Activated CD4-positive, alpha-beta memory T cell treated with anti-CD3 and anti-CD28 coated beads for 36 hours (primary cell): ENCODE measurements at regions of chr16 and their contacts with region 1.

Region 1: DNA sequence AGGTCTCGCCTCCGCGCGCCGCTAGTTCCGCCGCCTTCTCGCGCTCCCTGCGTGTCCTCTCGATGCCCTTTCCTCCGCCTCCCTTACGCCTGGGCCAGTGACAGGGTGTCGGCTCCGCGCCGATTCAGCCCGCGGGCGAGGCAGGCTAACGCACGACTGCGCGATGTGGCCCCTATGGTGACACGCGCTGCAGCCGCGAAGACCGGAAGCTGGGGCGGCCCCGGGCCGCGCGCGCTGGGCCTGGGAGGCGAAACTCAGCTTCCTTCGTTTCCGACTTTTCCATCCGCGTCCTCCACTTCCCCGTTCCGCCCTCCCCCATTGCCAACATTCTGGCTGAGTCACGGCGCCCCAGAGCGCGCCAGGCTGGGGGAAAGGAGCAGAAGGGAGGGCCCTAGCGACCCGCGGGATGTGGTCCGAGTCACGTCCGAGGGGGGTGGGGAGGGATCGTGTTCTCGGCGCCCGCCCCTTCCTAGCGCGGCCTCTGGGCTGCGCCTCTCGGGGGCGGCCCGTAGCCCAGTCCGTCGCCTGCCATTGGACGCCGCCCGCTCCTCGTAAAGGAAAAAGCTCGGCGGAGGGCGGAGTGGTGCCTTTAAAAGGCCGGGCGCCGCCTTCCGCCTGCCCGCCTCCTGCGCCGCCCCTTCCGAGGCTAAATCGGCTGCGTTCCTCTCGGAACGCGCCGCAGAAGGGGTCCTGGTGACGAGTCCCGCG is at the start of gene ALDOA:
- DNase-seq: peak; percentile 98
- H3K4me3 Mint-ChIP-seq: peak within 1 kb of the TSS; percentile 97
- H3K27ac Mint-ChIP-seq: peak within 1 kb of the TSS; percentile 99
- H3K4me1 Mint-ChIP-seq: peaks cover 34% of the 10 kb centered on the region
- H3K27me3 Mint-ChIP-seq: no peaks in the 10 kb centered on the region
- total RNA-seq, gene ALDOA: 1,724 to 1,734 TPM

Region 2: DNA sequence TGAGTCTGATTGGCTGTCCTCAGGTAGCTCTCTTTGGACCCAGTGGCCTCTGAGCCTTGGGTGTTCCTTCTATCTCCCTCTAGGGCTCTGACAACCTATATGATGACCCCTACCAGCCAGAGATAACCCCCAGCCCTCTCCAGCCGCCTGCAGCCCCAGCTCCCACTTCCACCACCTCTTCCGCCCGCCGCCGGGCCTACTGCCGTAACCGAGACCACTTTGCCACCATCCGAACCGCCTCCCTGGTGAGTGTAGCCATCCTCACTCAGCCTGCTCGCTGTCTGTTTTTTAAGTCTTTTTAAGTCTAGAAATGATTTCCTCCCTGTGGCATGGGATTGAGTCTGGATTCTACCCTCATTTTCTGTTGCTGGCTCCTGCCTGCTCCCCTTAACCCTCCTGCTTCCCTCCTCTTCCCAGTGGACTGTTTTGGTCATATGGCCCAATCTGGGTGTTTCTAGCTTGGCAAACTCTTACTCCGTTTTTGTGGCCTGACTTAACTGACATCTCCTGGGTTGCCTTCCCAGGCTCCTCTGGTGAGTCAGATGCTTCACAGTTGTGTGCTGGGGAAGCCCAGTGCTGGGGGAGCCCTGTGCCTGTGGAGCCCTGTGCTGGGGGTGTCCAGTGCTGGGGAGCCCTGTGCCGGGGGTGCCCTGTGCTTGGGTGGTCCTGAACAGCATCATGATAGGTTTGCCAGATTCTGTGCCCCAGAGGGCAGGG is 81.7 kb before region 1 on chr16:
- CTCF ChIA-PET with region 1: no interaction called
- POLR2A ChIA-PET with region 1: no interaction called
- intact Hi-C with region 1: no loop called
- DNase-seq: no peak
- H3K4me3 Mint-ChIP-seq: no peak overlapping the region
- H3K27ac Mint-ChIP-seq: no peak overlapping the region
- H3K4me1 Mint-ChIP-seq: no peaks in the 10 kb centered on the region
- H3K27me3 Mint-ChIP-seq: no peaks in the 10 kb centered on the region

Region 3: DNA sequence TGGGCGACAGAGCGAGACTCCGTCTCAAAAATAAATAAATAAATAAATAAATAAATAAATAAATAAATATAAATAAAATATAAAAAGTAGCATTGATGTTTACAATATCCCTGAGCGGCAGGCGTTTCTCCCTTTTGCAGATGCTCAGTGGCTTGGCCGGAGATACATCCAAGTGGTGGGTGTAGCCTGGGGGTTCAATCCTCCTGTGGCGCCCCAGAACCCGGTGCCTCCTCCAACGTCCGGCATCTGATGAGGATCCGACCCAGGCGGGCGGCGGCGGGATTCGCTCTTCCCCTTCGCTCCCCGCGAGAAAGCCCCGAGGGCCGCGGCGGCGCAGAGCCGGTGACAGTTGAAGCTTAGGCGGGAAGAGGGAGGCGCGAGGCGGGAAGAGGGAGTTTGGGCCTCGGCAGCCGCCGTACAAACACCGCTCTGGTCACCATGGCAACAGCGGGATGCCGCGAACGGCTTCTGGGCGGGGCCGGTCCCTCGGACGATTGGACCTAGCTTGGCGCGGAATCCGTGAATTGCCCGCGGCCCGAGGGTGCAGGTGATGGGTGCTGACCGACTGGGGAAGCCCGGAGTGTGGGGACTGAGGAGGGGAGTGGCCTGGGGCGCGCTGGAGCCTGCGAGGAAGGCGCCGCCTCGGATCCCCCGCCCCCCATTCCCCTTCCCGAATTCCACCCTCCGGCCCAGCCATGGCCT is 12.5 kb before region 1 on chr16:
- CTCF ChIA-PET with region 1: interaction called, 33 read pairs
- POLR2A ChIA-PET with region 1: interaction called, 48 read pairs
- intact Hi-C with region 1: loop called (anchors 1 kb)
- DNase-seq: peak; percentile 95
- H3K4me3 Mint-ChIP-seq: peak overlapping the region; percentile 86
- H3K27ac Mint-ChIP-seq: peak overlapping the region; percentile 49
- H3K4me1 Mint-ChIP-seq: peaks cover 28% of the 10 kb centered on the region
- H3K27me3 Mint-ChIP-seq: no peaks in the 10 kb centered on the region

Region 4: DNA sequence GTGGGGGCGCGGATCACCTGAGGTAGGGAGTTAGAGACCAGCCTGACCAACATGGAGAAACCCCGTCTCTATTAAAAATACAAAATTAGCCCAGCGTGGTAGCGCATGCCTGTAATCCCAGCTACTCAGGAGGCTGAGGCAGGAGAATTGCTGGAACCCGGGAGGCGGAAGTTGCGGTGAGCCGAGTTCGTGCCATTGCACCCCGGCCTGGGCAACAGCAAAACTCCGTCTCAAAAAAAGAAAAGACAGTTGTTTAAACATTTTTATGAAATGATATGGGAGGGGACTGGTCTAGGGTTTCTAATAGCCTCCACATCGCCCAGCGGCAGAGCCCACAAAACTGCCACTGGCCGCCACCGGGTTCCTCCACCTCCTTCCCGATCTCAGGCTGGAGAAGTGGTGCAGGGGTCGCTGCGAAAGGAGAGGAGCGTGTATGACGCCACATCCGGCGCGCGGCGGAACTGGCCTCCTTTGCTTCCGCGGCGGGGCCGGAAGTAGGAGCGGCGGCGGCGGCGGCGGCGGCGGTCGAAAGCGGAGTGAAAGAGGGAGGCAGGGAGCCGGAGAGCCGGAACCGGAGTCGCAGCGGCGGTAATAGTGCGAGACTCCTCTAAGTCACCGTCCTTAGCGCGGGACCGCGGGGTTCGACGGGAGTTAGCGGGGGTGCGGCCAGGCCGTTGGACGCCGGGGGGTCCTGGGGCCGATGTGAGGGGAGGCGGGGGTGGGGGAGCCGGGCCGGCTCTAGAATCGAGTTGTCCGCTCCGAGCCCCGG is 10.4 kb after region 1 on chr16 and contains the start of gene PPP4C:
- CTCF ChIA-PET with region 1: interaction called, 18 read pairs
- POLR2A ChIA-PET with region 1: interaction called, 42 read pairs
- intact Hi-C with region 1: loop called (anchors 1 kb)
- DNase-seq: peak; percentile 95
- H3K4me3 Mint-ChIP-seq: peak within 1 kb of the TSS; percentile 91
- H3K27ac Mint-ChIP-seq: peak within 1 kb of the TSS; percentile 93
- H3K4me1 Mint-ChIP-seq: peaks cover 39% of the 10 kb centered on the region
- H3K27me3 Mint-ChIP-seq: no peaks in the 10 kb centered on the region
- total RNA-seq, gene PPP4C: 121 to 133 TPM

Region 5: DNA sequence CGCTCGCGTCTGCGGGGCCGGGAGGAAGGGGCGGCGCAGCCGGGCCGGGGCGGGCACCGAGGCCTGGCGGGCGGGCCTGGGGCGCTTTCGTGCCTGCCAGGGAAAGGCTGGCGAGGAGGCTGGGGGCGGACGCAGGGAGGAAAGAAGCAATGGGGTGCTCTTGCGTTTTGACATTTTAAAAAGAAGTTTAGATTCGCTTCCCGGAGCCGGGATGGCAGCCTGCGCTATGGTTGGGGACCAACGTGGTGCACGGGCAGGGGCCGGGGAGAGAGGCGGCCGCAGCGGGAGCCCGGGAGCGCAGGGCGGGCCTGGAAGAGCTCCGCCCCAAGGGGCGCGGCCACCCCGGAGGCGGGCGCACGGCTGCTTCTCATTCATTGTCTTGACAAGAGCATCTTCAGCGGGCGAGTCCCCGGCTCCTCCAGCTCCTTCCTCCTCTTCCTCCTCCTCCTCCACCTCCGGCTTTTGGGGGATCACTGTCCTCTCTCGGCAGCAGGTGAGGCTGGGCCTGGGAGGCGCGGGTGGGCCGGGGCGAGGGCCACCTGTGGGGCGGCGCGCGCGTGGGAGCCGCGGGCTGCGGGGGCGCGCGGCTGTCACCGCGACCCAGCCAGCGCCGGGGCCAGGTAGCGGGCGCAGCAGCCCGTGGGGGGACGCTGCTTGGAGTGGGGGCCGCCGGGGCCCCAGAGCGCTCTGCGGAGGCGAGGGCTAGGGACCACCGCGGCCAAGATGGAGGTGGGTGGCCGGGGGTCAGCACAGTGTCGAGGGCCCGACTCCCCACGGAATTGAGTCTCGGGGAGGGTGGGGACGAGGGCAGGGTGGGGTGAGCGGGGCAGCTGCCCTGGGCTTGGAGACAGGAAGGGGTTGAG is 118.2 kb after region 1 on chr16 and contains the start of gene CORO1A:
- CTCF ChIA-PET with region 1: interaction called, 3 read pairs
- POLR2A ChIA-PET with region 1: interaction called, 10 read pairs
- intact Hi-C with region 1: no loop called
- DNase-seq: peak; percentile 92
- H3K4me3 Mint-ChIP-seq: peak within 1 kb of the TSS; percentile 100
- H3K27ac Mint-ChIP-seq: peak within 1 kb of the TSS; percentile 100
- H3K4me1 Mint-ChIP-seq: peaks cover 24% of the 10 kb centered on the region
- H3K27me3 Mint-ChIP-seq: no peaks in the 10 kb centered on the region
- total RNA-seq, gene CORO1A: 1,027 to 1,051 TPM

Region 6: DNA sequence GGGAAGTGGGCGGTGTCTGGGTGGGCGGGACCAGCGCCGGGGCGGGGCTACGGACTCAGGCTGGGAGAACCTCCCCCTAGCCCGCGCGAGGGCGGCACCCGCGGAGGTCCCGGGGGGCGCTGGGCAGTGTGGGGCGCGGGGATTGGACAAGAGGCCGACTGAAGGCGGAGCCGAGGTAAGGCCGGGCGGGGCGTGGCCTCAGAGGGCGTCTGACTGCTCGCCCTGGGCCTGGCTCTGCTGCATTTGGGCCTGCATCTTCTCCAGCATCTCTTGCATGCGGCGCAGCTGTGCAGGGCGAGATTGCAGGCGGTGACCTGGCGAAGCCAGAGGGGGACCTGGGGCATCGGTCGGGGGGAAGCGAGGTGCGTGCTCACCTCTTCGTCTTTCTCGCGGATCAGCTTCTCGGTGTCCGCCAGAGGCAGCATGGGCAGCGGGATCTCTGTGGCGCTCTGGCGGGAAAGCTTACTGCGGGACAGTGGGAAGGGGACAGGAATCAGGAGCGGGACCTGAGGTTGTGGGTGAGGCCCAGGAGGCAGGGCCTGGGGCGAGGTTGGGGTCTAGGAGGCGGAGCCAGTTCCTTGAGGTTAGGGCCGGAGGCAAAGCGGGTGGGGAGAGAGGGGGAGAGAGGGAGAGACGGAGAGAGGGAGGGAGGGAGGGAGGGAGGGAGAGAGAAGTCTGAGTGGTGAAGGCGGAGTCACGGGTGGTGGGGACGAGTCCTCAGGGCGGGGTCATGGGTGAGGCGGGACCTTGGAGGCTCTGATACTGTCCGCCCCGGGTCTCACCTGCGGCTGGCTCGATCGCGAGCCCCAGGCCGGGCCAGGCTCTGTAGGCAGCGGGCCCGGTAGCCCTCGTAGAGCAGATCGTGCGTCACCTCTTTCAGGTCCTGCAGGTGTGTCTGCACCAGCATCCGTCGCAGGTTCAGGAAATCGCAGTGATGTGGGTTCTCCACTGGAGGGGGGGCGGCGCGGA is 313.2 kb after region 1 on chr16:
- CTCF ChIA-PET with region 1: no interaction called
- POLR2A ChIA-PET with region 1: no interaction called
- intact Hi-C with region 1: loop called (anchors 2 kb)
- DNase-seq: peak; percentile 100
- H3K4me3 Mint-ChIP-seq: peak overlapping the region; percentile 99
- H3K27ac Mint-ChIP-seq: peak overlapping the region; percentile 96
- H3K4me1 Mint-ChIP-seq: peaks cover 44% of the 10 kb centered on the region
- H3K27me3 Mint-ChIP-seq: no peaks in the 10 kb centered on the region

Region 7: GRCh38 chr16:30585400-30586189 is 520.3 kb after region 1 on chr16 and contains the start of gene ZNF785:
- CTCF ChIA-PET with region 1: no interaction called
- POLR2A ChIA-PET with region 1: no interaction called
- intact Hi-C with region 1: no loop called
- DNase-seq: peak; percentile 97
- H3K4me3 Mint-ChIP-seq: peak within 1 kb of the TSS; percentile 83
- H3K27ac Mint-ChIP-seq: peak within 1 kb of the TSS; percentile 83
- H3K4me1 Mint-ChIP-seq: peaks cover 32% of the 10 kb centered on the region
- H3K27me3 Mint-ChIP-seq: no peaks in the 10 kb centered on the region
- total RNA-seq, gene ZNF785: 14.0 to 15.0 TPM

Region 8: GRCh38 chr16:31179747-31180459 is 1114.6 kb after region 1 on chr16 and contains the start of gene FUS:
- CTCF ChIA-PET with region 1: no interaction called
- POLR2A ChIA-PET with region 1: no interaction called
- intact Hi-C with region 1: no loop called
- DNase-seq: peak; percentile 93
- H3K4me3 Mint-ChIP-seq: peak within 1 kb of the TSS; percentile 86
- H3K27ac Mint-ChIP-seq: peak within 1 kb of the TSS; percentile 99
- H3K4me1 Mint-ChIP-seq: peaks cover 44% of the 10 kb centered on the region
- H3K27me3 Mint-ChIP-seq: peaks cover 4% of the 10 kb centered on the region
- total RNA-seq, gene FUS: 459 to 489 TPM